Activated CD4-positive, alpha-beta T cell treated with anti-CD3 and anti-CD28 coated beads, Interleukin-2, amount 10 ng/mL, durations not matched to agents 24 days and 14 days (primary cell): ENCODE measurements at regions of chr22 and their contacts with region 1.

Region 1: GRCh38 chr22:30591588-30592359 is at the start of gene PES1:
- DNase-seq: peak; percentile 98
- H3K4me3 Mint-ChIP-seq: no peak within 1 kb of the TSS
- H3K27ac Mint-ChIP-seq: no peak within 1 kb of the TSS
- H3K4me1 Mint-ChIP-seq: no peaks in the 10 kb centered on the region
- H3K27me3 Mint-ChIP-seq: peaks cover 14% of the 10 kb centered on the region
- total RNA-seq, gene PES1: 170 and 173 TPM in 2 replicates

Region 2: DNA sequence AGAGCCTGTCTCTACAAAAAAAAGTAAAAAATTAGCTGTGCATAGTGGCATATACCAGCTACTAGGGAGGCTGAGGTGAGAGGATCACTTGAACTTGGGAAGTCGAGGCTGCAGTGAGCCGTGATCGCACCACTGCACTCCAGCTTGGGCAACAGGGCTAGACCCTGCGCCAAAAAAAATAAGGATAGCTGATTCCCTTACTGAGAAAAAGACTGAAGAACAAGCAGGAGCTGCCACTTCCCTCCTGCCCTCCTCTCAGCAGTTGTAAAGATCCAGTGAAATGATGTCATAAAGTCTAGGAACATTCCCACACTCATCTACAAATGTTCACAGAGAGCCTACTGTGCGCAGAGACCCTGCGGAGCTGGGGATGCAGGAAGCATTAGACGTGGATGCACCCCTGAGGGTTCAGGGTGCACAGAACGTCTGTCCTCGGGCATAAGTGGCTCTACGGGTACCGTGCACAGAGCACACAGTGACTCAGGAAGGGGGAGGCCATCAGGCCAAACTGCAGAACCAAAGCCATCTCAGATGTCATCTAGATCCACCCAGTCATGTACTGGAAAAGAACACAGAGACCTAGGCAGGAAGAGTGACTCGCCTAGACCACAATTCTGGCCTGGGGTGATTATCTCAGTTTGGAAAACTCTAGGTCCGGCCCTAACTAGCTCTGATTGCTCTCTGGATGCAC is 183.2 kb before region 1 on chr22:
- intact Hi-C with region 1: no loop called
- DNase-seq: no peak
- H3K4me3 Mint-ChIP-seq: no peak overlapping the region
- H3K27ac Mint-ChIP-seq: peak overlapping the region; percentile 45
- H3K4me1 Mint-ChIP-seq: peaks cover 24% of the 10 kb centered on the region
- H3K27me3 Mint-ChIP-seq: no peaks in the 10 kb centered on the region

Region 3: DNA sequence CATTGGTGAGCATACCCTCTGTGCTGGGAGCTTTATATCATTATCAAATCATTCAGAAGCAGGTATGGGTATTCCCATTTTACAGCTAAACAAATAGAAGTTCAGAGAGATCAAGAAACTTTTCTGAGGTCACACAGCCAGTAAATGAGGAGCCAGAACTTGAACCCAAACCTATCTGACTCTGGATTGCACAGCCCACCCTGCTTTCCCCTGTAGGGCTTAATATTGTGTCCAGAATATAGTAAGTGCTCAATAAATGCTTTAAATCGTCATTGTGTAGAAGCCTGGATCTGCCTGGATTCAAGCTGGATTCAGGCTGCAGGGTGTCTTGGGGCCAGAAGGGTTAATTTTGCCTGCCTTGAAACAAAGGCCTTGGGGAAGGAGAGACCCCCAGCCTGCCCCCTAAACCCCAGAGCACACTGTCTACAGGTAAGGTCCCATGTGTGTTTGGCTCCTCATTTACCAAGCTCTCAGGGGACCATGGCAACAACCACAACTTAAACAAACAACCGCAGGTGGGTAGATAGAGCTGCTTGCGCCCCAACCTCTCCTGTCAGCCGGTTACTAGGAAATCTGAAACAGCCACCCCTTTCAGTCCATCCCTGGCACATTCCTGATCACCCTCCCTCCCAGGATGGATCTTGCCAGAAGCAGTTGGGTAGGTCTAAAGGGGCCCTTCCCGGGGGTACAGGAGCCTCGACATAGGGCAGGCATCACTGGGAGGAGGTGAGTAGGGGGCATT is 116.9 kb before region 1 on chr22:
- intact Hi-C with region 1: no loop called
- DNase-seq: peak; percentile 64
- H3K4me3 Mint-ChIP-seq: no peak overlapping the region
- H3K27ac Mint-ChIP-seq: no peak overlapping the region
- H3K4me1 Mint-ChIP-seq: peaks cover 8% of the 10 kb centered on the region
- H3K27me3 Mint-ChIP-seq: peaks cover 15% of the 10 kb centered on the region

Region 4: DNA sequence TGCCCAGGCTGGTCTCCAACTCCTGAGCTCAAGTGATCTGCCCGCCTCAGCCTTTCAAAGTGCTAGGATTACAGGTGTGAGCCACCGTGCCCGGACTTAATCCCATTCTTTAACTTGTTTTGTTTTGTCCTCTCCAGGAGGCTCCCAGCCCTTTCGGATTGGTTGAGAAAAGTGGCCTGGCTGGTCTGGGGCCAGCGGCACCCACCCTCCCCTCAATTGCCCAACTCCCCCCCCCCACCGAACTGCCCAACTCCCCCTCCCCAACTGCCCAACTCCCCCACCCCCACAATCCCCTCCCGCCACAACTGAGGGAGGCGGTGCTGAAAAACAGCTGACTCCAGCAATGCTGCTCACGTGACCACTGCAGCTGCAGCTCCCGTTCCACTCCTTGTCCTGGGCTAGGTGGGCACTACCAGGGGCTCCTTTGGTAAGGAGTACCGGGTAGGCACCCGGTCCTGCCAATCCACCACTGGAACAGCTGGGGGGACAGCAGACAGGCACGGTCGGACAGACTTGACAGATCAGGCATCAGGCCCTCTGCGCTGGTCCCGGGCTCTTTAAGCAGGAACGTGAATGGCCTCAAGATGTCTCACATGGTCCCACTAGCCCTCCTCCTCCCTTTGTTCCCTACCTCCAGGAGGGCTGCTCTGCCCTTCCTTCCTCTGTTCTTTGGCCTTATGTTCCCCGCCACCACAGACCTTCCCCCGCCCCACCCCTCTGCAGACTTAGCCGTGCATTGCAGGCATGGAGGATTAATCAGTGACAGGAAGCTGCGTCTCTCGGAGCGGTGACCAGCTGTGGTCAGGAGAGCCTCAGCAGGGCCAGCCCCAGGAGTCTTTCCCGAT is 14.9 kb after region 1 on chr22 and contains the start of gene TCN2:
- intact Hi-C with region 1: loop called (anchors 2 kb)
- DNase-seq: peak; percentile 78
- H3K4me3 Mint-ChIP-seq: peak within 1 kb of the TSS; percentile 86
- H3K27ac Mint-ChIP-seq: peak within 1 kb of the TSS; percentile 85
- H3K4me1 Mint-ChIP-seq: peaks cover 47% of the 10 kb centered on the region
- H3K27me3 Mint-ChIP-seq: no peaks in the 10 kb centered on the region
- total RNA-seq, gene TCN2: 0.35 and 0.45 TPM in 2 replicates